Mammary epithelial cell (primary cell): ENCODE measurements at regions of chr10 and their contacts with region 1.

Region 1: GRCh38 chr10:95308389-95309302 is 17.8 kb upstream of the PDLIM1 start:
- DNase-seq: peak; percentile 95
- H3K4me3 ChIP-seq: no peak overlapping the region
- H3K27ac ChIP-seq: peak overlapping the region; percentile 26
- H3K4me1 ChIP-seq: peaks cover 14% of the 10 kb centered on the region
- H3K27me3 ChIP-seq: no peaks in the 10 kb centered on the region
- CTCF ChIP-seq: no peak

Region 2: GRCh38 chr10:95273393-95274312 is 35.0 kb before region 1 on chr10:
- CTCF ChIA-PET with region 1: no interaction called
- dilution Hi-C with region 1: no loop called
- in situ Hi-C with region 1: no loop called
- intact Hi-C with region 1: loop called (anchors 1 kb)
- DNase-seq: peak; percentile 87
- H3K4me3 ChIP-seq: peak overlapping the region in 2 of 3 experiments; percentile 4 to 35
- H3K27ac ChIP-seq: peak overlapping the region; percentile 88
- H3K4me1 ChIP-seq: peaks cover 63% of the 10 kb centered on the region
- H3K27me3 ChIP-seq: no peaks in the 10 kb centered on the region
- CTCF ChIP-seq: no peak

Region 3: DNA sequence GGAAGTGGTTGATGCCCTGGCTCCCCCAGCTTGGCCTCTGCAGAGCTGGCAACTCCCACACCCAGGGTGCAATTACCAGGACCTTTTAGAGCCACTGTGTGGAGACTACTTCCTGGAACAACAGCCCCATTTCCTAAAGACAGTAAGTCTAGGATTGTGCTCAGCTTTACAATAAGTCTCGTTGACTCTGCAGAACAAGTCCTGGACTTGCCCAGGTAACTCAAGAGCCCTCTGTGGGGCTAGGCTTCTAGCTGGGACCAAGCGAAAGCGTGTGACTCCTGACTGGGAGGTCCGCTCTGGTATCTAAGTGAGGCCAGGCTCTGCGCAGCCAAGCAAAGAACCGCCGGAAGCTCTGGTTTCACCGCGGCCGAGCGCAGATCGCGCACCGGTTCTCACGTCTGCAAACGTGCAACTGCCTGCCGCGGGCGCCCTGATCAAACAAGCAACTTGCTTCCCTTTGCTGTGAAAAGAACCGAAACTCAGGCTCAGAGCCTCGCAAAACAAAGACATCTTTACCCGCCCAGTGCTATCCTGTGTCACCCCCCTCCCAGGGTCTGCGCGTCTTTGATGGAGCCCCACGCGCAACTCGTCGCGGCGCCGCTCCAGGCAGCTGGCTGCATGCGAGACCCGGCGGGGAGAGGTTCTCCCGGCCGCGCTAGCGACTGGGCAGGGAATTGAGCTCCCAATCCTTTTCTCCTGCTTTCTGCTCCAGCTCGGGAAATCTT is 13.5 kb before region 1 on chr10:
- CTCF ChIA-PET with region 1: no interaction called
- dilution Hi-C with region 1: no loop called
- in situ Hi-C with region 1: no loop called
- intact Hi-C with region 1: no loop called
- DNase-seq: peak; percentile 91
- H3K4me3 ChIP-seq: peak overlapping the region in 2 of 3 experiments; percentile 14 to 32
- H3K27ac ChIP-seq: peak overlapping the region; percentile 73
- H3K4me1 ChIP-seq: peaks cover 21% of the 10 kb centered on the region
- H3K27me3 ChIP-seq: no peaks in the 10 kb centered on the region
- CTCF ChIP-seq: no peak

Region 4: GRCh38 chr10:95333997-95334804 is 25.6 kb after region 1 on chr10:
- CTCF ChIA-PET with region 1: no interaction called
- dilution Hi-C with region 1: no loop called
- in situ Hi-C with region 1: no loop called
- intact Hi-C with region 1: loop called (anchors 2 kb)
- DNase-seq: peak; percentile 39
- H3K4me3 ChIP-seq: no peak overlapping the region
- H3K27ac ChIP-seq: peak overlapping the region; percentile 52
- H3K4me1 ChIP-seq: peaks cover 21% of the 10 kb centered on the region
- H3K27me3 ChIP-seq: no peaks in the 10 kb centered on the region
- CTCF ChIP-seq: no peak

Region 5: GRCh38 chr10:95363303-95363912 is 54.8 kb after region 1 on chr10:
- CTCF ChIA-PET with region 1: no interaction called
- dilution Hi-C with region 1: no loop called
- in situ Hi-C with region 1: no loop called
- intact Hi-C with region 1: no loop called
- DNase-seq: peak; percentile 52
- H3K4me3 ChIP-seq: no peak overlapping the region
- H3K27ac ChIP-seq: no peak overlapping the region
- H3K4me1 ChIP-seq: peaks cover 19% of the 10 kb centered on the region
- H3K27me3 ChIP-seq: no peaks in the 10 kb centered on the region
- CTCF ChIP-seq: peak; percentile 85 to 94

Region 6: DNA sequence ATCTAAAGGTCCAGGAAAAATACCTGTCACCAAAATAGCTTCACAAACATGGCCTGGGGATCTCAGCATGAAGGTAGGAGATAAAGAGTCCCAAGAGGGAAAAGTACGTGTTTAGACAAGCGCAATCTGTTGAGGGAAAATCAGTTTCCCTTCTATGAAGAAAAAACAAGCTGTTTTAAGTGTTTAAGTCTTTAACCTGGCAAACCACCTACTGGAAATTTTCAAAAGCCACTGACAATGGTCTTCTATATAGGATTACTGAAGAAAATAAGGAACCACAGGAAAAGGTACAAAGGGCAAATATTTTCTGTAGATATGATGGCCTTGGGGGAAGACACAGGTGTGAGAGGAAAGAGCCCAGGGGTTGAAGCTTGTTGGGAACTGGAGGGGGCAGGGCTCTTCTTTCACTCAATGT is 326.7 kb after region 1 on chr10:
- CTCF ChIA-PET with region 1: no interaction called
- dilution Hi-C with region 1: no loop called
- in situ Hi-C with region 1: no loop called
- intact Hi-C with region 1: no loop called
- DNase-seq: no peak
- H3K4me3 ChIP-seq: no peak overlapping the region
- H3K27ac ChIP-seq: no peak overlapping the region
- H3K4me1 ChIP-seq: no peaks in the 10 kb centered on the region
- H3K27me3 ChIP-seq: no peaks in the 10 kb centered on the region
- CTCF ChIP-seq: no peak

Region 7: GRCh38 chr10:95841661-95842498 is 533.2 kb after region 1 on chr10:
- CTCF ChIA-PET with region 1: no interaction called
- dilution Hi-C with region 1: no loop called
- in situ Hi-C with region 1: no loop called
- intact Hi-C with region 1: no loop called
- DNase-seq: peak; percentile 40
- H3K4me3 ChIP-seq: no peak overlapping the region
- H3K27ac ChIP-seq: no peak overlapping the region
- H3K4me1 ChIP-seq: no peaks in the 10 kb centered on the region
- H3K27me3 ChIP-seq: peaks cover 3% of the 10 kb centered on the region
- CTCF ChIP-seq: peak; percentile 52 to 72